Heart right ventricle (tissue), 16 donors: ENCODE measurements at regions of chr22 and their contacts with region 1.

Region 1: GRCh38 chr22:40950962-40951794 is at the start of gene RBX1:
- DNase-seq: peak; percentile 98 to 99
- ATAC-seq: peak; percentile 96 to 99 (median 97)
- H3K4me3 ChIP-seq: peak within 1 kb of the TSS; percentile 60 to 91 (median 74)
- H3K27ac ChIP-seq: peak within 1 kb of the TSS; percentile 62 to 100 (median 94)
- H3K4me1 ChIP-seq: peaks cover 0 to 47% (median 30%) of the 10 kb centered on the region in 9 donors
- H3K27me3 ChIP-seq: no peaks in the 10 kb centered on the region
- CTCF ChIP-seq: no peak
- total RNA-seq, gene RBX1: 58.0 to 71.6 (median 59.8) TPM

Region 2: GRCh38 chr22:40990430-40990829 is 39.3 kb after region 1 on chr22:
- intact Hi-C with region 1: no loop called
- DNase-seq: no peak
- ATAC-seq: no peak
- H3K4me3 ChIP-seq: no peak overlapping the region
- H3K27ac ChIP-seq: no peak overlapping the region
- H3K4me1 ChIP-seq: no peaks in the 10 kb centered on the region
- H3K27me3 ChIP-seq: peaks cover 0 to 19% (median 8%) of the 10 kb centered on the region in 7 donors
- CTCF ChIP-seq: no peak

Region 3: GRCh38 chr22:41022470-41023298 is 71.5 kb after region 1 on chr22:
- intact Hi-C with region 1: loop called in 5 of 10 experiments (anchors 1 to 10 kb)
- DNase-seq: peak; percentile 91 to 94
- ATAC-seq: peak; percentile 94 to 97 (median 95)
- H3K4me3 ChIP-seq: peak overlapping the region; percentile 66 to 91 (median 74)
- H3K27ac ChIP-seq: peak overlapping the region; percentile 66 to 100 (median 98)
- H3K4me1 ChIP-seq: peaks cover 3 to 18% (median 15%) of the 10 kb centered on the region in 9 donors
- H3K27me3 ChIP-seq: no peaks in the 10 kb centered on the region
- CTCF ChIP-seq: peak in 2 of 9 donors; percentile 3 to 16

Region 4: GRCh38 chr22:41048791-41049717 is 97.9 kb after region 1 on chr22:
- intact Hi-C with region 1: loop called in 1 of 10 experiments (anchors 1 kb)
- DNase-seq: peak; percentile 76 to 81
- ATAC-seq: peak; percentile 85 to 98 (median 96)
- H3K4me3 ChIP-seq: peak overlapping the region in 6 of 10 donors; percentile 31 to 43 (median 37)
- H3K27ac ChIP-seq: peak overlapping the region in 9 of 10 donors; percentile 26 to 79 (median 53)
- H3K4me1 ChIP-seq: peaks cover 0 to 27% (median 12%) of the 10 kb centered on the region in 9 donors
- H3K27me3 ChIP-seq: no peaks in the 10 kb centered on the region
- CTCF ChIP-seq: no peak

Region 5: GRCh38 chr22:41078931-41079330 is 127.8 kb after region 1 on chr22:
- intact Hi-C with region 1: loop called in 1 of 10 experiments (anchors 5 kb)
- DNase-seq: no peak
- ATAC-seq: peak in 6 of 8 donors; percentile 35 to 81 (median 50)
- H3K4me3 ChIP-seq: no peak overlapping the region
- H3K27ac ChIP-seq: no peak overlapping the region
- H3K4me1 ChIP-seq: no peaks in the 10 kb centered on the region
- H3K27me3 ChIP-seq: no peaks in the 10 kb centered on the region
- CTCF ChIP-seq: no peak